ENCODE measurements at regions of chr11 and their contacts with region 1.

Region 1: DNA sequence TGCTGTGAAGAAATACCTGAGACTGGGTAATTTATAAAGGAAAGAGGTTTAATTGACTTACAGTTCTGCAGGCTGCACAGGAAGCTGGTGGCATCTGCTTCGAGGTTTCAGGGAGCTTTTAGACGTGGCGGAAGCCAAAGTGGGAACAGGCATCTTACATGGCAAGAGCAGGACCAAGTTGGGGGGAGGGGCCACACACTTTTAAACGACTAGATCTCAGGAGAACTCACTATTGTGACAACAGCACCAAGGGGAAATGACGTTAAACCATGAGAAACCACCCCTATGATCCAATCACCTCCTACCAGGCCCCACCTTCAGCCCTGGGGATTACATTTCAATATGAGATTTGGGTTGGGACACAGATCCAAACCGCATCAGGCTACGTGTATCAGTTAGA is 11.1 kb upstream of the SCGB1D4 start:
- DNase-seq: peak in 1 of 2 donors; percentile 10
- ATAC-seq: no peak
- H3K4me3 ChIP-seq: no peak overlapping the region
- H3K4me3 Mint-ChIP-seq: no peak overlapping the region
- H3K27ac ChIP-seq: no peak overlapping the region
- H3K27ac Mint-ChIP-seq: no peak overlapping the region
- H3K4me1 ChIP-seq: peaks cover 13% of the 10 kb centered on the region
- H3K4me1 Mint-ChIP-seq: peaks cover 11 to 15% of the 10 kb centered on the region in 2 donors
- H3K27me3 ChIP-seq: peaks cover 3% of the 10 kb centered on the region
- H3K27me3 Mint-ChIP-seq: peaks cover 20 to 27% of the 10 kb centered on the region in 2 donors
- CTCF ChIP-seq: no peak

Region 2: GRCh38 chr11:62169935-62170548 is 139.9 kb before region 1 on chr11:
- intact Hi-C with region 1: loop called (anchors 5 kb)
- DNase-seq: no peak
- ATAC-seq: no peak
- H3K4me3 ChIP-seq: no peak overlapping the region
- H3K4me3 Mint-ChIP-seq: no peak overlapping the region
- H3K27ac ChIP-seq: no peak overlapping the region
- H3K27ac Mint-ChIP-seq: no peak overlapping the region
- H3K4me1 ChIP-seq: no peaks in the 10 kb centered on the region
- H3K4me1 Mint-ChIP-seq: peaks cover 4 to 5% of the 10 kb centered on the region in 2 donors
- H3K27me3 ChIP-seq: no peaks in the 10 kb centered on the region
- H3K27me3 Mint-ChIP-seq: peaks cover 23 to 54% of the 10 kb centered on the region in 2 donors
- CTCF ChIP-seq: no peak

Region 3: GRCh38 chr11:62621567-62622470 is 311.8 kb after region 1 on chr11 and contains the start of gene B3GAT3:
- intact Hi-C with region 1: no loop called
- DNase-seq: peak; percentile 95 to 99
- ATAC-seq: peak; percentile 86 to 97 (median 89)
- H3K4me3 ChIP-seq: peak within 1 kb of the TSS; percentile 77
- H3K4me3 Mint-ChIP-seq: peak within 1 kb of the TSS; percentile 93
- H3K27ac ChIP-seq: peak within 1 kb of the TSS; percentile 97
- H3K27ac Mint-ChIP-seq: peak within 1 kb of the TSS; percentile 94 to 98
- H3K4me1 ChIP-seq: peaks cover 20% of the 10 kb centered on the region
- H3K4me1 Mint-ChIP-seq: peaks cover 17 to 21% of the 10 kb centered on the region in 2 donors
- H3K27me3 ChIP-seq: no peaks in the 10 kb centered on the region
- H3K27me3 Mint-ChIP-seq: no peaks in the 10 kb centered on the region
- CTCF ChIP-seq: no peak
- total RNA-seq, gene B3GAT3: 64.9 to 80.3 (median 77.9) TPM

Measured in natural killer cell (primary cell).